HAP-1 (cell line): ENCODE measurements at regions of chr11 and their contacts with region 1.

Region 1: GRCh38 chr11:18731949-18732821 is 6.2 kb upstream of the IGSF22 start:
- DNase-seq: peak; percentile 28 to 78
- H3K4me3 ChIP-seq: no peak overlapping the region
- H3K4me1 ChIP-seq: no peaks in the 10 kb centered on the region
- H3K27me3 ChIP-seq: no peaks in the 10 kb centered on the region

Region 2: GRCh38 chr11:18526521-18527296 is 205.5 kb before region 1 on chr11 and contains the start of gene TSG101:
- in situ Hi-C with region 1: loop called (anchors 25 kb)
- DNase-seq: peak; percentile 85 to 97
- H3K4me3 ChIP-seq: peak within 1 kb of the TSS; percentile 84
- H3K4me1 ChIP-seq: peaks cover 3% of the 10 kb centered on the region
- H3K27me3 ChIP-seq: no peaks in the 10 kb centered on the region

Region 3: GRCh38 chr11:18958221-18958910 is 226.2 kb after region 1 on chr11:
- in situ Hi-C with region 1: no loop called
- DNase-seq: no peak
- H3K4me3 ChIP-seq: no peak overlapping the region
- H3K4me1 ChIP-seq: no peaks in the 10 kb centered on the region
- H3K27me3 ChIP-seq: no peaks in the 10 kb centered on the region; the same call in 1 of the 2 replicates